Ovary (tissue), 10 donors: ENCODE measurements at regions of chr1 and their contacts with region 1.

Region 1: DNA sequence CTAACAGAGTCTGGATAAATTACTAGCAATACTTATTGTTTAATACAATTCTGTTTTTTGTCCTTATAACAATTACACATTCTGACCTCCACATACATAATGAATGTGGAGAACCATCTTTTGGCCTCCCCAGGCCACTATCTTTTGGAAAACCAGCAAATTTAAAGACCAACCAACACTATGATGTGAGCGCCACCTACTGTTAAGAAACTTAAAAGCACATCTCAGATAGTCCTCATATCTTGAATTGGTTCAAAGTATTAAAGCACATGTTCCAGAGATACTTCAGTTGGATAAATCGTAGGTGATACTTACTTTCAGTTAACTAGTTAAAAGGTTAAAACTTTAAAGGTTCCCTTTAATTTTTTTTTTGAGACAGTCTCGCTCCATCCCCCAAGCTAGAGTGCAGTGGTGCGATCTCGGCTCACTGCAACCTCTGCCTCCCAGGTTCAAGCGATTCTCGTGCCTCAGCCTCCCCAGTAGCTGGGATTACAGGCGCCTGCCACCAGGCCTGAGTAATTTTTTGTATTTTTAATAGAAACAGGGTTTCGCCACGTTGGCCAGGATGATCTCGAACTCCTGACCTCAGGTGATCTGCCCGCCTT is 29.3 kb upstream of the USP1 start:
- DNase-seq: no peak
- H3K4me3 ChIP-seq: no peak overlapping the region
- H3K27ac ChIP-seq: no peak overlapping the region
- H3K4me1 ChIP-seq: no peaks in the 10 kb centered on the region
- H3K27me3 ChIP-seq: no peaks in the 10 kb centered on the region
- CTCF ChIP-seq: peak in 2 of 3 donors; percentile 25 to 44
- EP300 ChIP-seq: no peak
- POLR2A ChIP-seq: no peak

Region 2: DNA sequence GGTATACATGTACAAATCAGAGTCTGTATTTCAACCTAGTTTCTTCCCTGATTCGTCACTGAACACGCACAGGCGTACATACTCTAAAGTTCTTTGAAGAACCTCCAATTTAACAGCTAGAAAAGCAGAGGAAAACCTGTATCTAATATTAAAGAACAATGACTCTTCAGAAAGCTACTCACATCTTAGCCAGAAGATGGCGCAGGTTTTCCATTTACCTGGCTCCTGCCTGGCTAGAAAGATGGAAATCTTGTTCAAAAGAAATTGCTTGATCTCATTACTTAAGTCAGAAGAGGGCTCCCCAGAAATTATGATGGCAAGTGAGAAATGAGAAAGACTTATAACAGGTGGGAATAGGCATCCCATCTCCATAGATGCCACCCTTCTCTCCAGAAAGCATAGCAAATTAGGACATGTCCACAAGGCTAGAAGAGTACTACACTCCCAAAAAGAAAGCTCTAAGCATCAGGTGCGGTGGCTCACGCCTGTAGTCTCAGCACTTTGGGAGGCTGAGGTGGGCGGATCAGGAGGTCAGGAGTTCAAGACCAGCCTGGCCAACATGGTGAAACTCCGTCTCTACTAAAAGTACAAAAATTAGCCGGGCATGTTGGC is 231.8 kb before region 1 on chr1:
- intact Hi-C with region 1: loop called (anchors 5 to 10 kb)
- DNase-seq: peak in 1 of 5 donors; percentile 22
- H3K4me3 ChIP-seq: no peak overlapping the region
- H3K27ac ChIP-seq: no peak overlapping the region
- H3K4me1 ChIP-seq: no peaks in the 10 kb centered on the region
- H3K27me3 ChIP-seq: no peaks in the 10 kb centered on the region
- CTCF ChIP-seq: peak in 2 of 3 donors; percentile 28 to 31
- EP300 ChIP-seq: no peak
- POLR2A ChIP-seq: no peak